GM23248 (cell line): ENCODE measurements at regions of chr9 and their contacts with region 1.

Region 1: DNA sequence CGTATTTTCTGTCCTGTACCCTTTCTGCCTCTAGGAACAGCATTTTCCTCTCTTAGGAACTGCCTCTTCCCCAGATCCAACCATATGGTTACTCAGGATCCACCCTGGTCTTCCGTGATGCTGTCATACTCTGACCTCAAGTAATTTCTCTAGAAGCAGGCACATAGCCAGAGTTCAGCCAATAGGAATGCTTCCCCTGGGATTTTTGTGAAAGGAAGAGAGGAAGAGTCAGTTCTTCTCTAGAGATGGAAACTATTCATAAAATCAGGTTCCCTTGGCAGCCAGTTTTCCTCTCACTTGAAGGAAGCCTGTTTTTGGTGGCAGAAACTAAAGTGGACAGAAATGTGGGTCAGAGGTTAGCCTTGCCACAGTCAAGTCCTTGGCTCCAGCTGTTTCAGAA is 400.1 kb upstream of the PCSK5 start:
- DNase-seq: peak; percentile 4
- H3K4me3 ChIP-seq: no peak overlapping the region
- H3K27ac ChIP-seq: no peak overlapping the region
- H3K4me1 ChIP-seq: no peaks in the 10 kb centered on the region
- H3K27me3 ChIP-seq: no peaks in the 10 kb centered on the region

Region 2: DNA sequence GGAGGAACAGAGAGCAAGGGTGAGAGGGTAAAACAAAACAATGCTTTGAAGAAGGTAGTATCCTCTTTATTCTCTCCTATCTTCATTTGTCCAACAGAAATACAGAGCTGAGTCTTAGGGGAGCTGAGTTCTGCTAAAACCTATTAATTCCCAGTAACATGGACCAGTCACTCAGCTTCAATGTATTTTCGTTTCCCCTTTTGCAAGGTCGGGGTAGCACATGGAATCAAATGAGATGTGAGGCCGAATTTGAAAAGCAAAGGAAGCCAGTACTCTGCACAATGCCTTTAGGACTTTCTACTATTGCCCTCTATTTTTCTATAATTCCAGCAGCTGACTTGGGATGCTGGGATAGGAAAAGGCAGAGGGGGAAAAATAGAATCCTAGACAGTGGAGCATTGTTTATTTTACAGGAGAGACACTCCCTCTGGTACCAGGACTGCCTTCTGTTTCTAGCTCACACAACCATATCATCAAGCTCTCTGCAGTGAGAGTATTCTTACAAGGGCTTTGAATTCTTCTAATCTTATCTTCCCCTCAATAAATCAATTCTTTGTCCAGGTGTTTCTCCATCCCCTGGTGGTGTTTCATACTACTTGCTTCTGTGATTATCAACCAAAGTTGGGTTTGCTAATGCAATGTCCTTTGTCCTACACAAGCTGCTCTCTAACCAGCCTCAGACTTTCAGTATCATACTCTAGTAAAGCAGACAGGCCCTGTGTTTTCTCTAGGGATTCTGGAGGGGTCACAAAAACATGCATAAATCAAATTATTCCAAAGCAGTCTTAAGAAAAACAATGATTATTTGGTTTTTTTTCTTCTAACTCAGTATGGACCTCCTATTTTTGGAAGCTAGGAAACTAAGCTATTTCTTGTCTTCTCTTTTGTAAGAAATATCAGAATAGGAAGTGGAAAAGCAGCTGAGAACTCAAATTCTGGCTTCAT is 60.5 kb before region 1 on chr9:
- in situ Hi-C with region 1: loop called (anchors 10 kb)
- DNase-seq: no peak
- H3K4me3 ChIP-seq: no peak overlapping the region
- H3K27ac ChIP-seq: no peak overlapping the region
- H3K4me1 ChIP-seq: no peaks in the 10 kb centered on the region
- H3K27me3 ChIP-seq: no peaks in the 10 kb centered on the region